ENCODE measurements at regions of chr1 and their contacts with region 1.

Region 1: DNA sequence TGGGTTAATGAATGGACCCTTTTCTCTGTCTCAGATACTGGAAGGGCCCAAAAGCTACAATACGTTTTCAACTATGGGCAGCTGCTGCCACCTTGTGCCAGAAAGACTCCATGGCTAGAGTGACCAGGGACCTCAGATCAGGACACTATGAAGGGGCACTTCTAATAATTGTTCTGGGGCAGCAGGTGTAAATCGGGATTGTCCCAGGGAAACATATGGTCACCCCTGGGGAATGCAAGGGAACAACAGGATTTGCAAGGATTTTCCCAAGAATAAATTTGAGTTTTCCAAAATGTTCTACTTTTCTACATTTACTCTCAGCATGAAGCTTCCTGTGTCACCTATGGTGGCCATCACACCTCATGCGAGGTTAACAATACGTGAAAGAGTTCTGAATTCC is 12.0 kb upstream of the FCAMR start:
- DNase-seq: no peak
- ATAC-seq: peak; percentile 98
- H3K4me3 ChIP-seq: no peak overlapping the region
- H3K27ac ChIP-seq: no peak overlapping the region
- H3K4me1 ChIP-seq: no peaks in the 10 kb centered on the region
- H3K27me3 ChIP-seq: no peaks in the 10 kb centered on the region; a peak in 1 of 4 replicates
- CTCF ChIP-seq: peak; percentile 85 to 94 (median 92)
- EP300 ChIP-seq: no peak
- POLR2A ChIP-seq: no peak
- RAD21 ChIP-seq: peak; percentile 97

Region 2: GRCh38 chr1:206635080-206635977 is 346.9 kb before region 1 on chr1 and contains the start of gene DYRK3:
- CTCF ChIA-PET with region 1: interaction called, 104 read pairs
- POLR2A ChIA-PET with region 1: no interaction called
- RAD21 ChIA-PET with region 1: interaction called, 23 read pairs
- SMC1A ChIA-PET with region 1: interaction called, 28 read pairs
- in situ Hi-C with region 1: no loop called
- intact Hi-C with region 1: loop called (anchors 5 kb)
- DNase-seq: peak; percentile 71
- ATAC-seq: peak; percentile 92
- H3K4me3 ChIP-seq: peak within 1 kb of the TSS; percentile 94
- H3K27ac ChIP-seq: peak within 1 kb of the TSS; percentile 62
- H3K4me1 ChIP-seq: peaks cover 26% of the 10 kb centered on the region
- H3K27me3 ChIP-seq: no peaks in the 10 kb centered on the region
- CTCF ChIP-seq: 0 out of 6 replicates have a peak, but pooled peaks of 1 of the 3 experiments have one; percentile 5
- EP300 ChIP-seq: 0 out of 4 replicates have a peak, but pooled peaks of 1 of the 2 experiments have one; percentile 17
- POLR2A ChIP-seq: peak; percentile 94
- RAD21 ChIP-seq: no peak
- polyA plus RNA-seq, gene DYRK3: 1.6 to 2.8 TPM

Region 3: GRCh38 chr1:206734499-206735142 is 247.6 kb before region 1 on chr1:
- CTCF ChIA-PET with region 1: interaction called, 105 read pairs
- POLR2A ChIA-PET with region 1: interaction called, 3 read pairs
- RAD21 ChIA-PET with region 1: interaction called, 36 read pairs
- SMC1A ChIA-PET with region 1: interaction called, 28 read pairs
- in situ Hi-C with region 1: loop called (anchors 5 kb)
- intact Hi-C with region 1: loop called (anchors 2 kb)
- DNase-seq: no peak
- ATAC-seq: peak; percentile 45
- H3K4me3 ChIP-seq: no peak overlapping the region
- H3K27ac ChIP-seq: no peak overlapping the region; the same call in 1 of the 2 replicates
- H3K4me1 ChIP-seq: peaks cover 28% of the 10 kb centered on the region
- H3K27me3 ChIP-seq: no peaks in the 10 kb centered on the region
- CTCF ChIP-seq: peak; percentile 84 to 98 (median 96)
- EP300 ChIP-seq: no peak
- POLR2A ChIP-seq: no peak; the same call in 1 of the 2 replicates
- RAD21 ChIP-seq: peak; percentile 98

Region 4: GRCh38 chr1:206856674-206857464 is 125.3 kb before region 1 on chr1:
- CTCF ChIA-PET with region 1: interaction called, 100 read pairs
- POLR2A ChIA-PET with region 1: no interaction called
- RAD21 ChIA-PET with region 1: interaction called, 4 read pairs
- SMC1A ChIA-PET with region 1: interaction called, 5 read pairs
- in situ Hi-C with region 1: no loop called
- intact Hi-C with region 1: loop called (anchors 2 kb)
- DNase-seq: no peak
- ATAC-seq: peak; percentile 82
- H3K4me3 ChIP-seq: no peak overlapping the region
- H3K27ac ChIP-seq: no peak overlapping the region
- H3K4me1 ChIP-seq: no peaks in the 10 kb centered on the region
- H3K27me3 ChIP-seq: no peaks in the 10 kb centered on the region; a peak in 1 of 4 replicates
- CTCF ChIP-seq: peak; percentile 10 to 61 (median 38); a peak in 4 of 6 replicates
- EP300 ChIP-seq: no peak
- POLR2A ChIP-seq: no peak
- RAD21 ChIP-seq: 0 out of 2 replicates have a peak, but pooled peaks have one; percentile 21

Region 5: GRCh38 chr1:206925106-206925736 is 57.0 kb before region 1 on chr1:
- CTCF ChIA-PET with region 1: interaction called, 314 read pairs
- POLR2A ChIA-PET with region 1: interaction called, 7 read pairs
- RAD21 ChIA-PET with region 1: interaction called, 192 read pairs
- SMC1A ChIA-PET with region 1: interaction called, 148 read pairs
- in situ Hi-C with region 1: no loop called
- intact Hi-C with region 1: no loop called
- DNase-seq: peak; percentile 91
- ATAC-seq: peak; percentile 72
- H3K4me3 ChIP-seq: no peak overlapping the region; the same call in 1 of the 2 replicates
- H3K27ac ChIP-seq: peak overlapping the region; percentile 99
- H3K4me1 ChIP-seq: peaks cover 51% of the 10 kb centered on the region
- H3K27me3 ChIP-seq: no peaks in the 10 kb centered on the region
- CTCF ChIP-seq: peak in 1 of 3 experiments; percentile 29; a peak in 1 of 6 replicates
- EP300 ChIP-seq: no peak; a peak in 1 of 4 replicates
- POLR2A ChIP-seq: no peak
- RAD21 ChIP-seq: peak; percentile 56

Region 6: DNA sequence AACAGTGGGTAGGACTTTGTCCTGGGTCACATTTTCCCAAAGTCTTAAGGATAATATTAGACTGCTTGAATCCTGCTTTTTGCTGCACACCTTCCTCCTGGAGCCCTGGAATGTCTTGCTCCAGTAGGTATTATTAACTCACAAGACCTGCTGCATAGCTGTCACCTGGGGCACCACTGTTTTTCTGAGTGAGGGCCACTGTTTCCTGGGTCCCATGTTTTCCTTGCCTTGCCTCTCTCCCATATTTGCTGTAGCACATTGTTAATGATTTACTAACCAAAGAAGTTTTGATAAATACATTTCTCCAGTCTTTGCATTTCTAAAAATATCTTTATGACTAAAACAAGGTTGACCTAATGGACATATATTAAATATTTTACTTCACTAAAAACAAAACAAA is 10.6 kb after region 1 on chr1:
- CTCF ChIA-PET with region 1: interaction called, 24 read pairs
- POLR2A ChIA-PET with region 1: no interaction called
- RAD21 ChIA-PET with region 1: interaction called, 16 read pairs
- SMC1A ChIA-PET with region 1: interaction called, 10 read pairs
- in situ Hi-C with region 1: no loop called
- intact Hi-C with region 1: no loop called
- DNase-seq: no peak
- ATAC-seq: no peak
- H3K4me3 ChIP-seq: no peak overlapping the region
- H3K27ac ChIP-seq: no peak overlapping the region
- H3K4me1 ChIP-seq: no peaks in the 10 kb centered on the region
- H3K27me3 ChIP-seq: peaks cover 0 to 5% of the 10 kb centered on the region in 2 experiments; a peak in 2 of 4 replicates
- CTCF ChIP-seq: no peak
- EP300 ChIP-seq: no peak
- POLR2A ChIP-seq: no peak
- RAD21 ChIP-seq: no peak